Aorta (tissue), 5 donors: ENCODE measurements at regions of chr12 and their contacts with region 1.

Region 1: GRCh38 chr12:105705765-105706164 is 375.3 kb downstream of the C12orf75 start:
- DNase-seq: peak in 1 of 2 donors; percentile 54
- ATAC-seq: peak; percentile 79
- H3K4me3 ChIP-seq: no peak overlapping the region
- H3K27ac ChIP-seq: peak overlapping the region; percentile 80 to 93
- H3K4me1 ChIP-seq: no peaks in the 10 kb centered on the region
- H3K27me3 ChIP-seq: no peaks in the 10 kb centered on the region

Region 2: GRCh38 chr12:105420659-105421240 is 285.0 kb before region 1 on chr12:
- intact Hi-C with region 1: loop called in 1 of 2 experiments (anchors 5 kb)
- DNase-seq: peak; percentile 79 to 87
- ATAC-seq: peak; percentile 89
- H3K4me3 ChIP-seq: no peak overlapping the region
- H3K27ac ChIP-seq: no peak overlapping the region
- H3K4me1 ChIP-seq: peaks cover 0 to 2% of the 10 kb centered on the region in 2 donors
- H3K27me3 ChIP-seq: no peaks in the 10 kb centered on the region

Region 3: GRCh38 chr12:105748806-105749600 is 43.2 kb after region 1 on chr12:
- intact Hi-C with region 1: loop called in 1 of 2 experiments (anchors 2 kb)
- DNase-seq: peak; percentile 87
- ATAC-seq: peak; percentile 79
- H3K4me3 ChIP-seq: no peak overlapping the region
- H3K27ac ChIP-seq: peak overlapping the region; percentile 83 to 96
- H3K4me1 ChIP-seq: peaks cover 5 to 9% of the 10 kb centered on the region in 2 donors
- H3K27me3 ChIP-seq: no peaks in the 10 kb centered on the region

Region 4: DNA sequence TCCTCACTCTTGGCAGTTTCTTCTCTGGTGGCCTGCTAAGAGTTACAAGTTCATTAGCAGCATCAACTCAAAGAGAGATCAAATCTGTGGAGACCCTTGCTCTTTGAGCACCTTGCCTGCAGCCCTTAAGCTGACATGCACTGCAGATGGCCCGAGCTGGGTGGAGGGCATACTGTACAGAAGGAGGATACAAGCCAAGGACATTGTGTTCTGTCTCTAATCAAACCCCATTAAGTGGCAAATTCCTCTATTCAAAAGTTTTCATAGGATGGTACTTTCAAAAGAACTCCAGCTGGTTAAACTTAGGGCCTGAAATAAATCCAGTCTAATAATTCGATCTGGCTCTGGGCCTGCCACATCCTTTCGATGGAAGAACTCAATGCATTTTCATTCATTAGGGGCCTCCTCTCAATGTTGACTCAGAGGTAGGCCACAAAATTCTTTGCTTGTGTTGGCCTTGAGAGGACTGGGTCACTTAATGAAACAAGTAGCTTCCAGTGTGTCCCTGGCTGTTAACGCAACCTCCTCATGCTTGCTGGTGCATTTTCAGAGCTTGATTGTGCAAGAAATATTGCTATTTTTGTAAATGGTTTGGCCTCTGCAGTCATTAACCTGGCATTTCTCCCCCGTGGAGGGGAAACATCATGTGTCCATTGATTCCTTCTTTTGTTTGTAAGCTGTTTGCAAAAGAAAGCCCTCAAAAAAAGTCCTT is 114.8 kb after region 1 on chr12:
- intact Hi-C with region 1: loop called in 1 of 2 experiments (anchors 10 kb)
- DNase-seq: peak in 1 of 2 donors; percentile 72
- ATAC-seq: peak; percentile 76
- H3K4me3 ChIP-seq: no peak overlapping the region
- H3K27ac ChIP-seq: peak overlapping the region; percentile 61 to 70
- H3K4me1 ChIP-seq: peaks cover 7 to 10% of the 10 kb centered on the region in 2 donors
- H3K27me3 ChIP-seq: no peaks in the 10 kb centered on the region